CD14-positive monocyte (primary cell): ENCODE measurements at regions of chr18 and their contacts with region 1.

Region 1: GRCh38 chr18:48193541-48194492 is 215.4 kb downstream of the ZBTB7C start:
- DNase-seq: no peak
- H3K4me3 ChIP-seq: no peak overlapping the region
- H3K4me3 Mint-ChIP-seq: no peak overlapping the region
- H3K27ac ChIP-seq: no peak overlapping the region
- H3K27ac Mint-ChIP-seq: no peak overlapping the region
- H3K4me1 ChIP-seq: no peaks in the 10 kb centered on the region
- H3K4me1 Mint-ChIP-seq: no peaks in the 10 kb centered on the region
- H3K27me3 ChIP-seq: peaks cover 0 to 4% of the 10 kb centered on the region in 2 donors
- H3K27me3 Mint-ChIP-seq: peaks cover 19 to 27% (median 22%) of the 10 kb centered on the region in 3 donors
- CTCF ChIP-seq: no peak

Region 2: GRCh38 chr18:48481092-48481491 is 287.3 kb after region 1 on chr18:
- intact Hi-C with region 1: no loop called
- DNase-seq: no peak
- H3K4me3 ChIP-seq: no peak overlapping the region
- H3K4me3 Mint-ChIP-seq: no peak overlapping the region
- H3K27ac ChIP-seq: no peak overlapping the region
- H3K27ac Mint-ChIP-seq: no peak overlapping the region
- H3K4me1 ChIP-seq: no peaks in the 10 kb centered on the region
- H3K4me1 Mint-ChIP-seq: peaks cover 4% of the 10 kb centered on the region
- H3K27me3 ChIP-seq: no peaks in the 10 kb centered on the region
- H3K27me3 Mint-ChIP-seq: no peaks in the 10 kb centered on the region
- CTCF ChIP-seq: no peak

Region 3: DNA sequence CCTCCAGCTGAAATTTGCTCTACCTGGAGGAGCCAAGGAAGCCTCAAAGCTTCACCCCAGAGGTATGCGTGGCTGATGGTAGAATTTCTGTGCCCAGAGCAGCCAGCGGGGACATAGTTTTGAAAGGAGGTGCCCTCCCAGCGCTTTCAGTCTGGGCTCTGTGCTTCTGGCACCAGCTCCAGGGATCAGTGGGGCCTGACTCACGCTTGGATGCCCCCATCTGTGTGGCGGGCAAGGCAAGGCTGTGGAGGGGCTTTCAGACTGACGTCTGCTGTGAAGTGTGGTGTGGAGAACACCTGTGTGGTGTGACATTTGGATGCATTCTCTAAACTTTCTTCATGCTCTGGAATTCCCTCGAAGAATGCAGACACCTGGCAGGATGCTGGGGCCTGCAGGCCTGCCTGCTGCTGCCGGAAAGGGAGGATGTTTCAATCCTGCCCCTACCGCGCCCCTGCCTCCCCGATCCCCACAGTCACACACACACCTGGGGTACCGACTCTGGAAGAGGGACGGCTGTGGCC is 429.2 kb after region 1 on chr18:
- intact Hi-C with region 1: loop called in 1 of 2 experiments (anchors 5 kb)
- DNase-seq: no peak
- H3K4me3 ChIP-seq: no peak overlapping the region
- H3K4me3 Mint-ChIP-seq: no peak overlapping the region
- H3K27ac ChIP-seq: no peak overlapping the region
- H3K27ac Mint-ChIP-seq: no peak overlapping the region
- H3K4me1 ChIP-seq: no peaks in the 10 kb centered on the region
- H3K4me1 Mint-ChIP-seq: no peaks in the 10 kb centered on the region
- H3K27me3 ChIP-seq: no peaks in the 10 kb centered on the region
- H3K27me3 Mint-ChIP-seq: peaks cover 0 to 3% (median 0%) of the 10 kb centered on the region in 3 donors
- CTCF ChIP-seq: no peak